Vagina (tissue), 2 donors: ENCODE measurements at regions of chr4 and their contacts with region 1.

Region 1: GRCh38 chr4:188864741-188865140 is 725.5 kb downstream of the TRIML1 start:
- DNase-seq: no peak
- H3K4me3 ChIP-seq: no peak overlapping the region
- H3K27ac ChIP-seq: no peak overlapping the region
- H3K4me1 ChIP-seq: no peaks in the 10 kb centered on the region
- H3K27me3 ChIP-seq: no peaks in the 10 kb centered on the region
- CTCF ChIP-seq: no peak
- POLR2A ChIP-seq: no peak

Region 2: DNA sequence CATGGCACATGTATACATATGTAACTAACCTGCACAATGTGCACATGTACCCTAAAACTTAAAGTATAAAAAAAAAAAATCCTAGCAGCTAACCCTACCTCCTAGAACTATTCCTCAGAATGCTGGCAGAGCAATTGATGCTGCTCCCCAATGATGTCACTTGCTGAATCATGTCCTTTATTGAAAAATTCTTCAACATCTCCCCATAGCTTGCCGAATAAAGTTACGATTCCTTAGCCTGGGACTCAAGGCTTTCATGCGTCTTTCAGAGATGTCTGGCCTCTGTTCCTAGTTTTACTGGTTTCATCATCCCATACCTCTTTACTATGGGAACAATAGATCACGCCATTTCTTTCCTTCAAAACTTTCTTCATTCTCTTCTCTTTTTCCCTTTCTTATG is 1966.4 kb before region 1 on chr4:
- intact Hi-C with region 1: loop called (anchors 5 kb)
- DNase-seq: no peak
- H3K4me3 ChIP-seq: no peak overlapping the region
- H3K27ac ChIP-seq: no peak overlapping the region
- H3K4me1 ChIP-seq: peaks cover 14% of the 10 kb centered on the region
- H3K27me3 ChIP-seq: no peaks in the 10 kb centered on the region
- CTCF ChIP-seq: no peak
- POLR2A ChIP-seq: no peak

Region 3: DNA sequence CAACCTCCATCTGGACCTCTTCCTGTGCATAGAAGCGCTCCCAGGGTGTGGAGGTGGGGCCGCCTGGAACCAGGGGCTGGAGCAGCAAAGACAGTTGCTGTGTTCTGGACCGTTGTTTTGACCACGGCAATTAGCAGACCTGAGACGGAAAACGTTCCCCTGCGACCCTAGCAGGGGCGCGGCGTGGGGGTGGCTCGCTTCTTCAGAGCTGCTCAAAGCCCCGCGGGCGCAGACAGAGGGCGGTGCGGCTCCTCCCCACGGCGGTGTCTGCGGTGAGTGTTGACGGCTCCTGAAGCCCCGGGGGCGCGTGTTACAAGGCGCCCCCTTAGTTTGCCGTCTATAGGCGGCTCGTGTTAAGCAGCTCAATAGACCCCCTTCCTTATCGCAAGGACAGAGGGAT is 646.3 kb before region 1 on chr4:
- intact Hi-C with region 1: no loop called
- DNase-seq: no peak
- H3K4me3 ChIP-seq: no peak overlapping the region
- H3K27ac ChIP-seq: no peak overlapping the region
- H3K4me1 ChIP-seq: no peaks in the 10 kb centered on the region
- H3K27me3 ChIP-seq: no peaks in the 10 kb centered on the region
- CTCF ChIP-seq: no peak
- POLR2A ChIP-seq: no peak